Pancreas (tissue), 10 donors: ENCODE measurements at regions of chr20 and their contacts with region 1.

Region 1: DNA sequence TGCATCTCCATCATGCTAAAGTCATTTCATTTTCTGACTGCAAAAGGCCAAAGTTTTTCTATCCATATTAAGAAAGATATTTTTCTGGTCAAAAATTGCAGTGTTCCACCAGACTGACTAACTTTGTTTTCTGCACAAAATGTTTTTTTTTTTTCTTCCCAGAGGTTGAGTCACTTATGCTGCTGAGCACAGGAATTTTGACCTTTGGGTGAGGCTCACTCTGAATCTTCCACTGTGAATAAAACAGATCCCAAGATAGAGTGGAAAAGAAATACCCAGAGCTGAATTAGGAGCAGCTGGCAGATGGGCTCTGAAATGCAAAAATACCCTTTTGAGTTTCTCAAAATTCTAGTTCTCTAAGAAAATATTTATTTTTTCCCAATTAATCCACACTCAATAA is 996.8 kb downstream of the KIF16B start:
- DNase-seq: no peak
- ATAC-seq: no peak
- H3K4me3 ChIP-seq: no peak overlapping the region
- H3K27ac ChIP-seq: no peak overlapping the region
- H3K4me1 ChIP-seq: no peaks in the 10 kb centered on the region
- H3K27me3 ChIP-seq: no peaks in the 10 kb centered on the region
- CTCF ChIP-seq: no peak

Region 2: DNA sequence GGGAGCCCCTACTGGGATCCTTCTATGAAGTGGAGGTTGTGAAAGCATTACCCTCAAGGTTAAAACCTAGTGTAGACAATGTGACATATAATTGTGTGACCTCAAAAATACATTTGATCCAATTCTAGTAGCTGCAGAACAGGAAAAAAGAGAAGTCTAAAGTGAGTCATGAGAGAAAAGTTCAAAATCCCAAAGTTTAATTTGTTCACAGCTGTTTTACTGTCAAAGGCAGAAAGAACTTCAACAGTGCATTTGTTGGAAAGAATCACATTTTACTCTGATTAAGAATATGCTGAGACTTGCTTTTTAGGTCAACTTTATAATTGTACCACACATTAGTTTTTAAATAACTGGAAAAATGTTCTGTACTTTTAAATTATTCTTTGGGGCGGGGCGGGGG is 211.6 kb before region 1 on chr20:
- intact Hi-C with region 1: no loop called
- DNase-seq: no peak
- ATAC-seq: no peak
- H3K4me3 ChIP-seq: no peak overlapping the region
- H3K27ac ChIP-seq: no peak overlapping the region
- H3K4me1 ChIP-seq: no peaks in the 10 kb centered on the region
- H3K27me3 ChIP-seq: no peaks in the 10 kb centered on the region
- CTCF ChIP-seq: no peak

Region 3: DNA sequence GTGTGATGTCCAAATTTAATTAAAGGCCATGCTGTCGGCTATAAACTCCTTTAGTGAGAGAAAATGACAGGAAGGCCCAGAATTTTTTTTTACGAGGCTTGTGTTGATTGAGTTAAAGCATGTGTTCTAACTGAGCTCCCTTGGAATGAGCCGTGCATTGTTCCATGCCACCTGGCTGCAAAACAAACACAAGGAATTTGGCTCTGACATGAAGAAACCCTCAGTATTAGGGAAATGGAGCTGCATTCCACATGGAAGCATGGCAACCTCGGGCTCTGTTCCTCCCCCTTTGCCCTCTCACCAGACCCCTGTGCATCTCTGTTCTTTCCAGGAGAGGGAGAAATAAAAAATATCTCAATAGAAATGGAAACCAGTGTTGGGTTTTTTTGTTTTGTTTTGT is 61.5 kb after region 1 on chr20:
- intact Hi-C with region 1: loop called in 1 of 3 experiments (anchors 10 kb)
- DNase-seq: peak in 1 of 6 donors; percentile 15
- ATAC-seq: peak in 2 of 4 donors; percentile 77 to 85
- H3K4me3 ChIP-seq: no peak overlapping the region
- H3K27ac ChIP-seq: no peak overlapping the region
- H3K4me1 ChIP-seq: peaks cover 0 to 6% (median 5%) of the 10 kb centered on the region in 3 donors
- H3K27me3 ChIP-seq: no peaks in the 10 kb centered on the region
- CTCF ChIP-seq: no peak